Sciatic nerve (tissue), 2 donors: ENCODE measurements at regions of chr6 and their contacts with region 1.

Region 1: GRCh38 chr6:83514866-83515466 is 2.6 kb downstream of the PRSS35 start:
- DNase-seq: no peak
- ATAC-seq: no peak

Region 2: DNA sequence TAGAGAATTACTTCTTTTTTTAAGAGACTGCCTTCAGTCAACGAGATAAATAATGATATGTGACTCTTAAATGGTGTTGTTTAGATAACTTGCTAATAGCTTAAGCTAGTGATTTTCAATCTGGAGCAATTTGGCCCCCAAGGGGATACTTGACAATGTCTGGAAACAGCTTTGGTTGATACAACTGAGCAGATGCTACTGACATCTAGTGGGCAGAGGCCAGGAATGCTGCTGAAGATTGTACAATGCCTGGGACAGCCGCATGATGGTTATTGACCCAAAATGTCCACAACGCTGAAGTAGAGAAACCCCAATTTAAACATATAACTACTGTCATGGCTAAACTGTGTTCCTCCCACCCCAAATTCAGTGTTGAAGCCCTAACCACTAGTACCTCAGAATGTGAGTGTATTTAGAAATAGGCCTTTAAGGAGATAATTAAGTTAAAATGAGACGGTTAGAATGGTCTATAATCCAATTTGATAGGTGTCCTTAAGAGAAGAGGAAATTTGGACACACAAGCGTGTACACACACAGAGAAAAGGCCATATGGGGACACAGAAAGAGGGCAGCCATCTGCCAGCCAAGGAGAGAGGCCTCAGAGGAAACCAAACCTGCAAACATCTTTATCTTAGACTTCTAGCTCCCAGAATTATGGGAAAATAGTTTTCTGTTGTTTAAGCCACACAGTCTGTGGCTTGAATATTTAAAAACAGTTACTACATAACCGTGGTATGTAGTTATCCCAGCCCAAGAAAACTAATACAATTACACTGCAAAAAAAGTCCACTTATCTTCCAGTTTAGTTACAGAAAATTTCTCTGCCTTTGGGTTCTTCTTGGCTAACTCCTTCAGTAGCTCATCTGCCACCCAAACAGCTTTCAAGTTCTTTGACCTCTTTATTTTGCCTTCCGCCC is 299.6 kb before region 1 on chr6:
- intact Hi-C with region 1: loop called (anchors 5 kb)
- DNase-seq: peak; percentile 62
- ATAC-seq: peak; percentile 96

Region 3: GRCh38 chr6:83378621-83379388 is 136.2 kb before region 1 on chr6:
- intact Hi-C with region 1: no loop called
- DNase-seq: no peak
- ATAC-seq: peak; percentile 44

Region 4: DNA sequence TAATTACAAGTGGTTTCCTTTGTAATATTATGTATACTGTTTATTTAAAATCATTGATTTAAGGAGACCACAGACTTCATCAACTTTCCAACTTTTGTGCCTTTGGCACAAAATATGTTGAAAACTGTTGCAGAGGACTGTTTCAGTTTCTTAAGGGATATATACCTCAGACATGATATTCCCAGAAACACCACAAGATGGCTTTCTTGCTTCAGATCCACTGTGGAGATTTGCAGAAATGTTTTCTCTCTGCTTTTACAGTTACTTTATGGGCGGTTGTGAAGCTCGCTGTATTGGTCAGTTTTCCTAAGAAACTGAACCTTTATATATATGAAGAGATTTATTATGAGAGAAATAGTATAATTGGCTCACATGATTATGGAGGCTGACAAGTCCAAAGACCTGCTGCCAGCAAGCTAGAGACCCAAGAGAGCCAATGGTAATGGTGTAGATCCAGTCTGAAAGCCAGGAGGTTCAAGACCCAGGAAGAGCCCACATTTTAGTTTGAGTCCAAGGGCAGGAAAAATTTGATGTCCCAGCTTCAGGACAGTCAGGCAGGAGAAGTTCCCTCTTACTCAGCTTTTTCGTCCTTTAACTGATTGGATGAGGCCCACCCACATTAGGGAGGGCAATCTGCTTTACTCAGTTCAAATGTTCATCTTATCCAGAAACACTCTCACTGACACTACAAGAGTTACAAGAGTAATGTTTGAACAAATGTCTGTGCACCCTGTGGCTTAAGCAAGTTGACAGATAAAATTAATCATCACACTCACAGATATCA is 96.9 kb before region 1 on chr6:
- intact Hi-C with region 1: loop called (anchors 5 kb)
- DNase-seq: no peak
- ATAC-seq: peak; percentile 80